ENCODE measurements at regions of chr9 and their contacts with region 1.

Region 1: DNA sequence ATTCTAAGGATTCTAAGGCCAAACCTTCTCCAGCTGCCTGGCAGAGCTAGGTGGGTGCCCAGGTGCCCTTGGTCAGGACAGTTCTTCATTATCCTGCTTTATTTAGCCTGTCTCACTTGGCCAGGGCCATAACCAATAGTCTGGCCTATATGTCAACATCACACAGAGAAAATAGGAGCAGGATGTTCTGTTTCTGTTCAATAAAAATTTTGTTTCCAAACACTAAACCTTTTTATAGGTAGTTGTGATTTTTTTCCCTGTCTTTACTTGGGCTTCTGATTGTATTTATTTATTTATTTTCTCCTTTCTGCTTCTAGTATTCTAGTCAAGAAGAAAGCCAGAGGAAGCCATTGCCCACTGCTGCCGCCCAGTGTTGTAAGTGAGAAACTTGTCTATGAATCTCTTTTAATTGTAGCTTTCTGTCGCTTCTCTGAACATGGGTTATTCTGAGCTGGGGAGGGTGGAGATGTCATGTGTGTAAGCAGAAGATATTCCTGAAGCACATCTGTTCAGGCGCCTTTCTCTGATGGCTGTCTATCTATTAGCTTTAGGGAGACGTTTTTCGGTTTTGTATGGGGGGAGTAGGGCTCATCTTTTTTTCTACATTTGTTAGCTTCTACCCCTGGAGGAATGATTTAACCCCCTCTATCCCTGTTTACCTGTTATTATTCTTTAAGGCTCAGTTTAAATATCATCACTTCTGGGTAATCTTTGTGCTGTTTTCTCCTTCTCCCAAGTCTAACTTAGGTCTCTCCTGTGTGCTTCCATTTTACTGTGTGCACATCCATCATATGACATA is 97.1 kb downstream of the UNC13B start:
- DNase-seq: peak; percentile 65 to 76 (median 71)
- H3K4me3 ChIP-seq: no peak overlapping the region
- H3K27ac ChIP-seq: no peak overlapping the region
- H3K4me1 ChIP-seq: no peaks in the 10 kb centered on the region
- H3K27me3 ChIP-seq: no peaks in the 10 kb centered on the region

Region 2: DNA sequence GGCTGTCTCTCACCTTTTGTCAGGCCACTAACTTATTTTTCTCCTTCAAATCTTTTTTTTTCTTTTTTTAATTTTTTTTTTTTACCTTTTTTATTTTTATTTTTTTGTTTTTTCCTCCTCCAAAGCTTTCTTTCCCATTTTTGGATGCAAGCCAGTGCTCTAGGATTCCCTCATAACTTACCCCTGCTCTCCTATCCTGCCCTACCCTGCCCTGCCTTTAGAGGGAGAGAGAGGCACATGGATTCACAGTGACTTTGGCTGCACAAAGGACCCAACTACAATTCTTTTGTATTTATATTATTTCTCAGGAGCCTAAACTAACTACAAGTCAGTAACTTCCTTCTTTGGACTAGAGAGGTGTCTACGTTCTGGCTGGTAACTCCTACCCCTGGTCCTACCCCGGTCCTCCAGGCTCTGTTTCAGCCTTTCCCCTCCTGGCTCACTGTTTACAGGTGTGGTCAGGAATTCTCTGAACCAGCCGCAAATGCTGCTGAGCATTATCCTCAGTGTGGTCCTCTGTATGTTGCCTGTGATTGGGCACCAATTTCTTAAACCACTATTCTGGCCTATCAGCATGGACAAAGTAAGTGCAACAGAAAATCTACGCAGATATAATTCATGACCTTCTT is 222.6 kb after region 1 on chr9:
- CTCF ChIA-PET with region 1: interaction called, 11 read pairs
- POLR2A ChIA-PET with region 1: no interaction called
- DNase-seq: peak; percentile 62 to 84 (median 80)
- H3K4me3 ChIP-seq: no peak overlapping the region
- H3K27ac ChIP-seq: no peak overlapping the region
- H3K4me1 ChIP-seq: peaks cover 0 to 2% (median 0%) of the 10 kb centered on the region in 4 experiments
- H3K27me3 ChIP-seq: no peaks in the 10 kb centered on the region